K562 (cell line): ENCODE measurements at regions of chr12 and their contacts with region 1.

Region 1: GRCh38 chr12:56616244-56616643 is 13.9 kb downstream of the BAZ2A start:
- DNase-seq: no peak
- ATAC-seq: no peak
- H3K4me3 ChIP-seq: no peak overlapping the region
- H3K27ac ChIP-seq: no peak overlapping the region
- H3K4me1 ChIP-seq: peaks cover 0 to 7% of the 10 kb centered on the region in 2 experiments; a peak in 2 of 5 replicates
- H3K27me3 ChIP-seq: no peaks in the 10 kb centered on the region
- CTCF ChIP-seq: no peak
- EP300 ChIP-seq: no peak
- POLR2A ChIP-seq: no peak
- RAD21 ChIP-seq: no peak

Region 2: GRCh38 chr12:56601503-56601902 is 14.7 kb before region 1 on chr12:
- CTCF ChIA-PET with region 1: interaction called, 3 read pairs
- POLR2A ChIA-PET with region 1: interaction called, 13 read pairs
- in situ Hi-C with region 1: no loop called
- intact Hi-C with region 1: no loop called
- DNase-seq: peak; percentile 30 to 50 (median 44)
- ATAC-seq: peak; percentile 83
- H3K4me3 ChIP-seq: no peak overlapping the region
- H3K27ac ChIP-seq: no peak overlapping the region
- H3K4me1 ChIP-seq: no peaks in the 10 kb centered on the region
- H3K27me3 ChIP-seq: no peaks in the 10 kb centered on the region
- CTCF ChIP-seq: peak; percentile 47 to 53 (median 48); a peak in 5 of 6 replicates
- EP300 ChIP-seq: no peak
- POLR2A ChIP-seq: 0 out of 2 replicates have a peak, but pooled peaks have one; percentile 13
- RAD21 ChIP-seq: peak in 1 of 2 experiments; percentile 47; a peak in 3 of 4 replicates